Right cardiac atrium (tissue), 5 donors: ENCODE measurements at regions of chr17 and their contacts with region 1.

Region 1: DNA sequence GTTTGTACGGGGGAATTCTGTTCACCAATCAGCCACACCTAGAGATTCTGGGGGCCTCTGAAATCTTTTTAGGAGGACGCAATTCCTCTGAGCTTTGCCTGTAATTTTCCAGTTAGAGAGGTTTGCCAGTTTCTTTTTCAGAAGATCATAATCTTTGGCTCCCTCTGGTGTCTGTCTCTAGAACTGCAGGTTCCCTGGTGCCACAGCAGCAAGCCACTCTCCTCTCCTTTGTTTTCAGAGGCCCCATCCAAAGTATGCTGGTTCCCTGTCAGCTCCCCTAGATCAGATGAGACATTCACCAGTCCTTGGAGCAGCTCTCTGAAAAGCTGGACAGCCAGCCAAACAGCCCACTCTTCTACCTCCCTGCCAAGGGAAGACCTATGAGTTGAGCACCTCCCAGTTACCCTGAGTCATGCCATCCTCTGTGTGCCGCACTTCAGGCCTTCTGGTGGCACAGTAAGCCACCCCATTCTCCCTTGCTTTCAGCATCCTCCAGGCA is 36.1 kb downstream of the RNF112 start:
- DNase-seq: peak in 2 of 3 donors; percentile 40 to 50
- ATAC-seq: peak; percentile 69 to 73
- H3K4me3 ChIP-seq: no peak overlapping the region
- H3K27ac ChIP-seq: no peak overlapping the region
- H3K4me1 ChIP-seq: no peaks in the 10 kb centered on the region
- H3K27me3 ChIP-seq: no peaks in the 10 kb centered on the region

Region 2: DNA sequence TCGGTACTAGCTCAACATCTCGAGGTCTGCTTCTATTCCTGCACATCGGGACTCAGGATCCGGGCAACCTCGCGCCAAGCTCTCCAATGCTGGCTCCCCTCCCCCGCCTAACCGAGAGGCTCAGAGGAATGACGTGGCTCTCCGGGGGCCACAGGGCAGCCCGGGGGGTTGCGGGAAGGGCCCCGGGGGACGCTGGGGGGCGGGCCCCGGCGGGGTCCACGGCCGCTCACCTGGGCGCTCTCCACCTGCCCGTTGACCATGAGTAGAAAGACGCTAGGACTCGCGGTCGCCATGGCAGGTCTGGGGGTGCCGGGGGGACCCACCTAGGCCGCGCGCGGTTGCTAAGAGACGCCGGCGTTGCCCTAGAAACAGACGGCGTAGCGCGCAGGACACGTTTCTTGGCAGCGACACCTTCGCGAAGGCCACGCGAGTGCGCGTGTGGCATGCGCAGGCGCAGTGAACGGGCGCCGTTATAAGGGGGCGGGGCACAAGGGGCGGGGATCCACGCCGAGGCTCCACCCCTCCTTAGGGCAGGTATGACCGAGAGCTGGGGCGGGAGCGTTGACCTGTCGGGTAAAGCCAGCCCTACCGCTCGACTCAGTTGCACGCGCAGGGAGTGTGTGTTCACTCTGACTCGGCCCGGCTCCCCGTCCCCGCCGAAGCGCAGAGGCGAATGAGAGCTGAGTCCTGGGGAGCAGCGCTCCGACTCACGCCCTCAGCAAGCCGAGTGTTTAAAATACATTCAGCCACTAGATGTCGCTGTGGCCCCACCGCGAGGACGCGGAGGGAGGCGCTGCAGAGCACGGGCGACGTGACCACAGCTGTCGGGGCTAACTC is 84.6 kb before region 1 on chr17 and contains the start of gene B9D1:
- intact Hi-C with region 1: loop called (anchors 2 to 5 kb)
- DNase-seq: peak; percentile 93 to 97 (median 97)
- ATAC-seq: peak; percentile 94
- H3K4me3 ChIP-seq: peak within 1 kb of the TSS; percentile 52
- H3K27ac ChIP-seq: no peak within 1 kb of the TSS
- H3K4me1 ChIP-seq: peaks cover 2% of the 10 kb centered on the region
- H3K27me3 ChIP-seq: no peaks in the 10 kb centered on the region
- total RNA-seq, gene B9D1: 9.8 to 14.6 (median 12.1) TPM

Region 3: GRCh38 chr17:19387921-19388521 is 59.1 kb before region 1 on chr17:
- intact Hi-C with region 1: no loop called
- DNase-seq: no peak
- ATAC-seq: no peak
- H3K4me3 ChIP-seq: no peak overlapping the region
- H3K27ac ChIP-seq: peak overlapping the region; percentile 93
- H3K4me1 ChIP-seq: peaks cover 23% of the 10 kb centered on the region
- H3K27me3 ChIP-seq: no peaks in the 10 kb centered on the region